PC-3 (cell line): ENCODE measurements at regions of chr7 and their contacts with region 1.

Region 1: DNA sequence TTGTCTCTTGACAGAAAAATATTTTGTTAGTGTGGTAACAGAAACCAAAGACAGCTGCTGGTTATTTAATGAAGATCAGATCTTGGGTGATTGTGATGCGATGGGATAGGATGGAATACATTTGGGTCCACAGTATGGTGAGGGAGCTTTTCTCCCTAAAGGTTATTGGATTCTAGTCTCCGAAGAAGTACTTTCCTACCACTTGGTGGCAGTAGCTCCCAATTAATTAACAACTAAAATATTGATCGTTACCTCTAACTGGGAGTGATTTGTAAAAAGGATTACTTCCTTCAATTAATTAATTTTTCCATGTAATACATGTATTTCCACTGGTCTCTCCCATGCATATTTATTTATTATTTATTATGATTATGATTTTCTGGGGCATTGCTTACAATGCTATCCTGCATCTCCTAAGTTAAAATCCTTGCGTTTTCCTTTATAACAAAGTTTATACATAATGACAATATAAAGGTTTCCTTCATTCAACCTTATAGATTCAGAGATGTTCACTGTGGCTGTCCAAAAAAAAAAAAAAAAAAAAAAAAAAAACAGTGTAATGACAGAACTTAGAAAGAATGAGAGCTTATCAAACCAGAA is 25.6 kb downstream of the TMEM196 start:
- DNase-seq: peak; percentile 81
- ATAC-seq: peak; percentile 78
- H3K4me3 ChIP-seq: no peak overlapping the region
- H3K27ac ChIP-seq: no peak overlapping the region
- H3K4me1 ChIP-seq: peaks cover 8% of the 10 kb centered on the region; the same call in 1 of the 2 replicates
- H3K27me3 ChIP-seq: no peaks in the 10 kb centered on the region
- CTCF ChIP-seq: peak; percentile 75

Region 2: DNA sequence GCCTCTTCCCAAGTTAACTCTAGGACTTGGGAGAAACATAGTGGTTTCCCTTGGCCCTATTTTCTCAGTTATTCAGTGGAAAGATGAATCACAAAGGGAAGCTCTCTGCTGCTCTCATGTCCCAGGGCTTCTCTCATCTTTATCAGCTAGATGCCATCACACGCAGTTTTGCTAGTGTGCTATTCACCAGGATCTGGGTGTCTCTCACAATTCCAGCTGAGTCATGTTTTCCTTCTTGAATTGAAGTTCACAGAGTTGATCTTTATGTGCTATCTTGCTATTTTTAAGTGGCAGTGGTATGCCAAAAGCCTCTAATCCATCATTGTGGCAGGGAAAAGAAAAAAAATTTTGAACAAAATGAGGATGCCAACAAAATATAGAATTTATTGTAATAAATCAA is 731.7 kb before region 1 on chr7:
- CTCF ChIA-PET with region 1: no interaction called
- POLR2A ChIA-PET with region 1: no interaction called
- intact Hi-C with region 1: no loop called
- DNase-seq: peak; percentile 4
- ATAC-seq: no peak
- H3K4me3 ChIP-seq: no peak overlapping the region
- H3K27ac ChIP-seq: no peak overlapping the region
- H3K4me1 ChIP-seq: peaks cover 19% of the 10 kb centered on the region
- H3K27me3 ChIP-seq: no peaks in the 10 kb centered on the region
- CTCF ChIP-seq: no peak

Region 3: DNA sequence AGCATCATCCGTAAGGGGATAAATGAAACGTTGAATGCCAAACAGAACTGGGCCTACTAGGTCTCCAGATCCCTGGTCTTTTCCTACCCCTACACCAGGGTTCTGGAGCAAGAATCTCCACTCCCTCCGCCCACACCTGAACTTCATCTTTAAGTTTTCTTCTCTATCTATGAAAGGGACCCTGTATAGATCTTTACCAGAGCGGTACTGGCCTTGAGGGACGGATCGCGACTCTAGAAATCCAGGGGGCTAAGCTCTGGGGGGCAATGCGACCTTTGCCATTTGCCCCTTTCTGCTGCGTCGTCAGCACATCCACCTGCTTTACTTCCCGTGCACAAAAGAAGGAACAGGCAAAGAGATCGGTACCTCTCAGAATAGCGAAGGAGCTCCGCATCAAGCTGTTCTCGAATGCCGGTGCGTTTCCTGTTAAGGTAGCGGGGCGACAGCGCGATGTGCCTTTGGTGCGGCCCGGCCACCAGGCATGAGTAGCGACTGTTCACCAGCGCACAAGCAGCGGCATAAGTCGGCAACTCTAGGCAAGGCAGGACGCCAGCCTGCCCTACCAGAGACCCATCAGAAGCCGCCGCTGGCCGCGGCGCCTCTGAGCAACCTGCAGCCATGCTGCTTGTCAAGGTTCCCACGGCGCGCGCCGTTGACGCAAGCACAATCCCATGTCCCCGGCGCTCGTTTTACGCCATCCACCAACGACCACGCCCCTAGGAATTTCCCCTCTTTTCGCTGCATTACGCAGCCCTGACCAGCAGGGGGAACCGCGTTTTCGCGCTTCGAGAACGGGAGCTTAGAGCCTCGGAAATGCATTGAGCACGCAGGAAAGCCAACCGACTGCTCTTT is 39.2 kb before region 1 on chr7 and contains the start of gene POLR1F:
- CTCF ChIA-PET with region 1: interaction called, 10 read pairs
- POLR2A ChIA-PET with region 1: interaction called, 5 read pairs
- intact Hi-C with region 1: loop called (anchors 2 kb)
- DNase-seq: peak; percentile 98
- ATAC-seq: peak; percentile 90
- H3K4me3 ChIP-seq: peak within 1 kb of the TSS; percentile 98
- H3K27ac ChIP-seq: peak within 1 kb of the TSS; percentile 8; the same call in 1 of the 2 replicates
- H3K4me1 ChIP-seq: peaks cover 24% of the 10 kb centered on the region
- H3K27me3 ChIP-seq: no peaks in the 10 kb centered on the region
- CTCF ChIP-seq: peak; percentile 82
- total RNA-seq, gene POLR1F: 19.8 and 22.3 TPM in 2 replicates

Region 4: GRCh38 chr7:19728716-19729115 is 19.1 kb before region 1 on chr7:
- CTCF ChIA-PET with region 1: interaction called, 5 read pairs
- POLR2A ChIA-PET with region 1: no interaction called
- intact Hi-C with region 1: loop called (anchors 1 kb)
- DNase-seq: no peak
- ATAC-seq: no peak
- H3K4me3 ChIP-seq: no peak overlapping the region
- H3K27ac ChIP-seq: no peak overlapping the region
- H3K4me1 ChIP-seq: no peaks in the 10 kb centered on the region
- H3K27me3 ChIP-seq: no peaks in the 10 kb centered on the region
- CTCF ChIP-seq: no peak

Region 5: GRCh38 chr7:19872094-19872493 is 124.3 kb after region 1 on chr7:
- CTCF ChIA-PET with region 1: no interaction called
- POLR2A ChIA-PET with region 1: no interaction called
- intact Hi-C with region 1: no loop called
- DNase-seq: no peak
- ATAC-seq: no peak
- H3K4me3 ChIP-seq: no peak overlapping the region
- H3K27ac ChIP-seq: no peak overlapping the region
- H3K4me1 ChIP-seq: no peaks in the 10 kb centered on the region
- H3K27me3 ChIP-seq: no peaks in the 10 kb centered on the region
- CTCF ChIP-seq: no peak

Region 6: GRCh38 chr7:20005081-20005480 is 257.2 kb after region 1 on chr7:
- CTCF ChIA-PET with region 1: no interaction called
- POLR2A ChIA-PET with region 1: no interaction called
- intact Hi-C with region 1: no loop called
- DNase-seq: no peak
- ATAC-seq: no peak
- H3K4me3 ChIP-seq: no peak overlapping the region
- H3K27ac ChIP-seq: no peak overlapping the region
- H3K4me1 ChIP-seq: no peaks in the 10 kb centered on the region
- H3K27me3 ChIP-seq: no peaks in the 10 kb centered on the region
- CTCF ChIP-seq: no peak

Region 7: GRCh38 chr7:20053334-20054104 is 305.7 kb after region 1 on chr7:
- CTCF ChIA-PET with region 1: no interaction called
- POLR2A ChIA-PET with region 1: no interaction called
- intact Hi-C with region 1: no loop called
- DNase-seq: no peak
- ATAC-seq: no peak
- H3K4me3 ChIP-seq: no peak overlapping the region
- H3K27ac ChIP-seq: no peak overlapping the region
- H3K4me1 ChIP-seq: no peaks in the 10 kb centered on the region
- H3K27me3 ChIP-seq: no peaks in the 10 kb centered on the region
- CTCF ChIP-seq: no peak

Region 8: GRCh38 chr7:20310963-20311742 is 563.3 kb after region 1 on chr7:
- CTCF ChIA-PET with region 1: interaction called, 12 read pairs
- POLR2A ChIA-PET with region 1: no interaction called
- intact Hi-C with region 1: loop called (anchors 1 kb)
- DNase-seq: peak; percentile 81
- ATAC-seq: peak; percentile 45; the same call in 1 of the 2 replicates
- H3K4me3 ChIP-seq: no peak overlapping the region
- H3K27ac ChIP-seq: no peak overlapping the region
- H3K4me1 ChIP-seq: no peaks in the 10 kb centered on the region
- H3K27me3 ChIP-seq: no peaks in the 10 kb centered on the region
- CTCF ChIP-seq: peak; percentile 75

Region 9: DNA sequence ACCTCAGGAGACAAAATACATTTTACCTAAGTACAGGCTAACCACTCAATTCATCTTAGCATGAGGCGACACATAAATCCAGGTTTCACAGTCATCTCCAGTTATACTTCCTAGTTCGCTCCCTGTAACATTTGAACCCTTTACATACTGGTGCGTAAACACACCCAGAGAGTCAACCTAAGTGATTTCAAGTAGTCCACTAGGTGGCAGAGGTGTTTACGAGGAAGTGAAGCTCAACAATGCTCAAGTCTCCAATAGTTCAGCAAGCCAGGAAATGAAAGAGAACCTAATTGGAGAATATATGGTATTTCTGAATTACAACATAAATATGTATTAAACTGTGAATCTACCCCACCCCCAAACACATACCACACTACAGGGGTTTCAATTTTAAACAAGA is 791.4 kb after region 1 on chr7:
- CTCF ChIA-PET with region 1: no interaction called
- POLR2A ChIA-PET with region 1: no interaction called
- intact Hi-C with region 1: loop called (anchors 10 kb)
- DNase-seq: peak; percentile 68
- ATAC-seq: peak; percentile 74; the same call in 1 of the 2 replicates
- H3K4me3 ChIP-seq: no peak overlapping the region
- H3K27ac ChIP-seq: no peak overlapping the region
- H3K4me1 ChIP-seq: peaks cover 9% of the 10 kb centered on the region; the same call in 1 of the 2 replicates
- H3K27me3 ChIP-seq: no peaks in the 10 kb centered on the region
- CTCF ChIP-seq: peak; percentile 72

Region 10: GRCh38 chr7:20980668-20981264 is 1232.9 kb after region 1 on chr7:
- CTCF ChIA-PET with region 1: interaction called, 15 read pairs
- POLR2A ChIA-PET with region 1: no interaction called
- intact Hi-C with region 1: no loop called
- DNase-seq: no peak
- ATAC-seq: no peak
- H3K4me3 ChIP-seq: no peak overlapping the region
- H3K27ac ChIP-seq: no peak overlapping the region
- H3K4me1 ChIP-seq: no peaks in the 10 kb centered on the region
- H3K27me3 ChIP-seq: peaks cover 67% of the 10 kb centered on the region
- CTCF ChIP-seq: no peak